Heart right ventricle (tissue), 16 donors: ENCODE measurements at regions of chr3 and their contacts with region 1.

Region 1: DNA sequence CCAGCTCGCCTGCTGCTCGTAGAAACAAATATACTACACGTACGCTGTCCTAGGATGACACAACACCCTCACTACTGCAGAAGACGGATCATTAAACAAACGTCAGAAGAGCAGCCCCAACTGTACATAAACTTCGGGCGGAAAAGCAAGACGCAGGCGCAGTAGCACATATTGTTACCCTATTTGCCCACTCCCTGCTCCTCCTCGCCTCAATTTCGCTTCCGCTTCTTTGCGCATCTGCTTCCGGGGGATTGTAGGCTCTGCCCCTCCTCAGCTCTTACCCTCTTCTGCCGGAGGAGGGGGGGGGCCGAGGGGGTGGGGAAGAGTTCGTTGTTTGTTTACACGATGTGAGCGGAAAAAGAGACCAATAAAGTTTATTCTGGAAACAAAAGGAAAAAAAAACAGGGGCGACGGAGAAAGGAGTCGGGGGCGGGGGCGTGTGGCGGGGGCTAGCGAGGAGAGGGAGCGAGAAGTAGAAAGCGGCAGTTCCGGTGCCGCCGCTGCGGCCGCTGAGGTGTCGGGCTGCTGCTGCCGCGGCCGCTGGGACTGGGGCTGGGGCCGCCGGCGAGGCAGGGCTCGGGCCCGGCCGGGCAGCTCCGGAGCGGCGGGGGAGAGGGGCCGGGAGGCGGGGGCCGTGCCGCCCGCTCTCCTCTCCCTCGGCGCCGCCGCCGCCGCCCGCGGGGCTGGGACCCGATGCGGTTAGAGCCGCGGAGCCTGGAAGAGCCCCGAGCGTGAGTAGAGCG is at the start of gene PIK3CA:
- DNase-seq: peak; percentile 87 to 97
- ATAC-seq: peak; percentile 96 to 99 (median 98)
- H3K4me3 ChIP-seq: peak within 1 kb of the TSS; percentile 75 to 97 (median 88)
- H3K27ac ChIP-seq: peak within 1 kb of the TSS; percentile 94 to 99 (median 98)
- H3K4me1 ChIP-seq: peaks cover 2 to 40% (median 34%) of the 10 kb centered on the region in 9 donors
- H3K27me3 ChIP-seq: no peaks in the 10 kb centered on the region
- CTCF ChIP-seq: no peak
- total RNA-seq, gene PIK3CA: 17.5 to 35.3 (median 24.4) TPM

Region 2: DNA sequence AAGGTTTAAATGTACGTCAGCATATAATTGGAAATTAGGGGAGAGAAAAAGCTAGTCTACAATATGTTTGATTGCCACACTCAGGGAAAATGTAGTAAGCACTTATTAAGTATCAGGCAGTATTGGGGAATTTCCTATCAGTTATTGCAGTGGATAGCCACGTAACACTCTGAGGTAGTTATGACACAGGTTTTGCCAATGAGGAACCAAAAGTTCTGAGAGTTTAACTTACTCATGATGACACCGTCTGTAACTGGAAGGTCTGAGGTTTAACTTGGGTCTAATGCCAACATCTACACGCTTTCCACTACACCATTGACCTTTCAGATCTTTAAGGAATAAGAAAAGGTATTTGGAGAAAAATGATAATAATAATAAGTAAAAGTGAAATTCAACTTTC is 165.9 kb before region 1 on chr3:
- intact Hi-C with region 1: no loop called
- DNase-seq: no peak
- ATAC-seq: no peak
- H3K4me3 ChIP-seq: no peak overlapping the region
- H3K27ac ChIP-seq: no peak overlapping the region
- H3K4me1 ChIP-seq: no peaks in the 10 kb centered on the region
- H3K27me3 ChIP-seq: no peaks in the 10 kb centered on the region
- CTCF ChIP-seq: no peak

Region 3: DNA sequence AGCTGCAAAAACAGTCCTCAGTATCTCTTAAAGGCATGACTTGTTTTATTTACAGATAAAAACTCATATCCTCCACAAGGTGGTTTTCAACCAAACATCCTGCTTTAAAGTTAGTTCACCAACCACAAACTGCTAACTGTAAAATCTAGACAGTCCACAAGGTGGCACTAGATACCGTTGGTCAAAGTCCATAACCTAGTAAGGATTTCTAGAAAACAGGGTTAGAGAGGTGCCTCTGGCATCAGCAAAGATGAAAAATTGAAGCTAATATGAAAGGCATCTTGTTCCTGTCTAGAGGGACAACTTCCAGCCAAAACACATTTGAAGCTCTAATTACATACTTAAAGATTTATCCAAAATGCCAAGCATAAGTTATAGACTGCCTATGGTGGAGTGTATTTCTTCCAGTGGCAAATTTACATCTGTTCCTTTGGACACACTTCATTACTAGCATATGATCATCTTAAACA is 132.5 kb before region 1 on chr3:
- intact Hi-C with region 1: loop called in 4 of 10 experiments (anchors 5 to 10 kb)
- DNase-seq: peak in 1 of 2 donors; percentile 56
- ATAC-seq: peak in 6 of 8 donors; percentile 55 to 83 (median 72)
- H3K4me3 ChIP-seq: no peak overlapping the region
- H3K27ac ChIP-seq: no peak overlapping the region
- H3K4me1 ChIP-seq: peaks cover 0 to 11% (median 10%) of the 10 kb centered on the region in 9 donors
- H3K27me3 ChIP-seq: no peaks in the 10 kb centered on the region
- CTCF ChIP-seq: peak; percentile 67 to 93 (median 87)

Region 4: DNA sequence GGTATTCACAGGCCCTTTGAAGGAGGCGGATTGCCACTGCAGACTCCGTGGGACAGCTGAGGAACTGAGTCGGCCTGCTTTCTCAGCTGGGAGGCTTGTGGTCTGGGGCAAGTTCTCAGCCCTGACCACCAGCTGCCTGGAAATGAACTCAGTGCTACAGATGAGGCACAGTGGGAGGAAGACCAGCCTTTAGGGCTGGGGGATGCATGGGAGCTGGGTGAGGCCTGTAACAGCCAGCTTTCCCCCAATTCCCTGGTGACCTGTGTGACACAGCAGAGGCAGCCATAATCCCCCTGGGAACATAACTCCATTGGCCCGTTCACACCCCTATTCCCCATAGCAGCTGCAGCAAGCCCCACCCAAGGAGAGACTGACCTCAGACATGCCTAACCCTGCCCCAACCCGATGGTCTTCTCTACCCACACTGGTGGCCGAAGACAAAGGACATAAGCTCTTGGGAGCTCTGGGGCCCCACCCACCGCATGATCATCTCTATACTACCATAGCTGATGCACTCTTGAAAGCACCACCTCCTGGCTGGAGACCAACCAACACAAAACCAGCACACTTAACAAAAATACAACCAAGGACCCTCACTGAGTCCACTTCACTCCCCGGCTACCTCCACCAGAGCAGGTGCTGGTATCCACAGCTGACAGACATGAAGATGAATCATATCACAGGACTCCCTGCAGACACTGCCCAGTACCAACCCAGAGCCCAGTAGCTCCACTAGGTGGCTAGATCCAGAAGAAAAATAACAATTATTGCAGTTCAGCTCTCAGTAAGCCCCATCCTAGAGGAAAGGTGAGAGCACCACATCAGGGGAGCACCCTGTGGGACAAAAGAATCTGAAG is 101.3 kb before region 1 on chr3:
- intact Hi-C with region 1: no loop called
- DNase-seq: no peak
- ATAC-seq: no peak
- H3K4me3 ChIP-seq: no peak overlapping the region
- H3K27ac ChIP-seq: no peak overlapping the region
- H3K4me1 ChIP-seq: peaks cover 0 to 17% (median 10%) of the 10 kb centered on the region in 9 donors
- H3K27me3 ChIP-seq: no peaks in the 10 kb centered on the region
- CTCF ChIP-seq: no peak

Region 5: DNA sequence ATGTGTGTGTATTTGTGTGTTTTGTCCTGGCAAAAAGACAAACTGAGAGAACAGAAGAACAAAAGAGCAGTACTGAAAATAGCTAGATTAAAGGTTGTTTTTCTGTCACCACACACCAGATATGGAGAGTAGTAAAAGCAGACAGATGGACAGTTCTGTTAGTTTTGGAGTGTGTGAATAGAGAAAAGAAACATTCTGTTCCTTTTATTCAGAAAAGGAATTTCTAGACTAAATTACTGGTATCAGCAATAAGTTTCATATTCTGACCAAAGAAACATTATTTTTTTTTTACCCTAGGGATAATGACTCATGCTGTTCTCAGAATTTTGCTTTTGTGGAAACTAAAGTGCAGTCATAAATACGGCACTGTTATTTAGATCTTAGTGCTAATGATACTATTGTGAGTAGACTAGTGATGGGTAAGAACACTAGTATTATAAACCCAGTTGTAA is 33.0 kb after region 1 on chr3:
- intact Hi-C with region 1: loop called in 2 of 10 experiments (anchors 5 kb)
- DNase-seq: no peak
- ATAC-seq: peak; percentile 72 to 85 (median 77)
- H3K4me3 ChIP-seq: no peak overlapping the region
- H3K27ac ChIP-seq: peak overlapping the region; percentile 4 to 71 (median 52)
- H3K4me1 ChIP-seq: peaks cover 21 to 75% (median 63%) of the 10 kb centered on the region in 9 donors
- H3K27me3 ChIP-seq: no peaks in the 10 kb centered on the region
- CTCF ChIP-seq: no peak

Region 6: DNA sequence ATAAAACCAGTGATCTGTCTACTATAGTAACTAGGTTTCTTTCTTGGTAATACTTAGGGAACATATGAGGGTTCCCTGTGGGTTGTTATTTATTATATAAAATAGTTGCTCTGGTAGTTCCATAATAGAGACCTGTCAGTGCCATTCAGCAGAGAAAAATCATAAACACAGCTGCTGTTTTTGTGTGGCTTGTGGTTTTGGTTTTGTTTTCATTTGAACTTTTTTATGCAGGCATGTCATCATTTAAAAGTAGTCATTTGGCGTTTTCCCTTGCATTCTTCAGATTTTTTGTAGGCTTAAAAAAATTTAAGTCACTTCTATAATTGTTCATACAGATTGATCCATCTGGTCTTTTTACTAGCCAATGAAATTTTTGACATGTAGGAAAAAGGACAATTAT is 48.1 kb after region 1 on chr3:
- intact Hi-C with region 1: loop called in 4 of 10 experiments (anchors 2 to 5 kb)
- DNase-seq: no peak
- ATAC-seq: peak in 2 of 8 donors; percentile 31 to 35
- H3K4me3 ChIP-seq: no peak overlapping the region
- H3K27ac ChIP-seq: peak overlapping the region in 2 of 10 donors; percentile 23 to 41
- H3K4me1 ChIP-seq: peaks cover 0 to 58% (median 42%) of the 10 kb centered on the region in 9 donors
- H3K27me3 ChIP-seq: no peaks in the 10 kb centered on the region
- CTCF ChIP-seq: no peak

Region 7: DNA sequence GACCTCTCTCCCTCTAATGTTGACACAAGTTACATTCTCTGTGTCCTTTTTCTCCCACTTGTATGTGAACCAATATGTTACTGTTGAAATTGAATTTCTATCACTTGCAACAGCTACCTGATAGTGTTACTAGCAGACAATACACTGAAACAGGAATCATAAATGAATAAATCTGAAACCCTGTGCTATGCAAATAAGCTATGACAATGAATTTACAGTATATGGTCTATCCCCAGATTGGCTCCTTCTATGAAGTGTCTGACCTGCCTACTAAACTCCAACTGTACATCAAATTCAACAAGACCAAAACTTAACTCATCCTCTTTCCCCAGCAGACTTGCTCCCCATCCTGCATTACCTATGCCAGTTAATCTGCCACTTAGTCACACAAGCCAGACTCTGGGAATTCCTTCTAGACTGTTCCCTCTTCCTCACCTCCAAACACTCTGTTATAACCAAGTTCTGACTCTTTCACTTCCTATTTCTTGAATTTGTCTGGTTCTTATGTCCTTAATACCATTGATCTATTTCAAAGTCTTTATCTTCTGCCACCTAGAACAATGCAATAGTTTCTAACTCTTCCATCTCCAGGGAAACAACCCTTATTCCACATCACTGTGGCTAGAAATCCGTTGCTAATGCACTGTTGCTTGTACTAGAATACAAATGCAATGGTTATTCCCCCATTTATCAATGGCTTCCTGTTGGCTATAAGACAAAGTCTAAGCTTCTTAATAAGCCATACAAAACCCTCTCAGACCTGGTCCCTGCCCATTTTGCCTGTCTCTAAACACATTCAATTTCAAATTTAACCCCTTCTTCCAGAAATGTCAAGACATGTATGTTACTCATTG is 161.4 kb after region 1 on chr3:
- intact Hi-C with region 1: loop called in 3 of 10 experiments (anchors 2 kb)
- DNase-seq: no peak
- ATAC-seq: no peak
- H3K4me3 ChIP-seq: no peak overlapping the region
- H3K27ac ChIP-seq: no peak overlapping the region
- H3K4me1 ChIP-seq: no peaks in the 10 kb centered on the region
- H3K27me3 ChIP-seq: peaks cover 0 to 12% (median 0%) of the 10 kb centered on the region in 7 donors
- CTCF ChIP-seq: no peak